ENCODE measurements at regions of chr4 and their contacts with region 1.

Region 1: GRCh38 chr4:106266201-106266600 is 49.8 kb downstream of the TBCK start:
- DNase-seq: no peak
- H3K4me3 Mint-ChIP-seq: no peak overlapping the region
- H3K27ac Mint-ChIP-seq: no peak overlapping the region
- H3K4me1 Mint-ChIP-seq: peaks cover 11% of the 10 kb centered on the region
- H3K27me3 Mint-ChIP-seq: no peaks in the 10 kb centered on the region
- CTCF ChIP-seq: no peak

Region 2: DNA sequence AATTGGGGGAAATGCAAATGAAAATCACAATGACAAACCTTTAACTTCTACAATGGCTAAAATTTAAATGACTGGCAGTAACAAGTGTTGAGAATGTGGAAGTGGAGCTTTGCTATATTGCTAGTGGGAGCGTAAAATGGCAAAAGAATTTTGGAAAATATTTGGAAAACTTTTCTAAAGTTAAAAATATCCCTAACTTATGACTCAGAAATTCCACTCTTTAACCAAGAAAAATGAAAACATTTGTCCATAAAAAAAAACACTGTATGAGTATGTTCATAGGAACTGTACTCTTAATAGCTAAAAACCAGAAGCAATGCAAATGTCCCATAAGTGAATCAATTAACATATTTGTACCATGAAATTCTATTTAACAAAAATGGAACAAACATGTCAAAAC is 46.2 kb after region 1 on chr4:
- CTCF ChIA-PET with region 1: interaction called, 5 read pairs
- intact Hi-C with region 1: loop called (anchors 5 kb)
- DNase-seq: no peak
- H3K4me3 Mint-ChIP-seq: no peak overlapping the region
- H3K27ac Mint-ChIP-seq: no peak overlapping the region
- H3K4me1 Mint-ChIP-seq: peaks cover 11% of the 10 kb centered on the region
- H3K27me3 Mint-ChIP-seq: no peaks in the 10 kb centered on the region
- CTCF ChIP-seq: no peak

Region 3: GRCh38 chr4:106369456-106370060 is 103.4 kb after region 1 on chr4:
- CTCF ChIA-PET with region 1: interaction called, 3 read pairs
- intact Hi-C with region 1: loop called (anchors 2 kb)
- DNase-seq: peak; percentile 43
- H3K4me3 Mint-ChIP-seq: no peak overlapping the region
- H3K27ac Mint-ChIP-seq: no peak overlapping the region
- H3K4me1 Mint-ChIP-seq: peaks cover 15% of the 10 kb centered on the region
- H3K27me3 Mint-ChIP-seq: no peaks in the 10 kb centered on the region
- CTCF ChIP-seq: peak; percentile 46

Region 4: DNA sequence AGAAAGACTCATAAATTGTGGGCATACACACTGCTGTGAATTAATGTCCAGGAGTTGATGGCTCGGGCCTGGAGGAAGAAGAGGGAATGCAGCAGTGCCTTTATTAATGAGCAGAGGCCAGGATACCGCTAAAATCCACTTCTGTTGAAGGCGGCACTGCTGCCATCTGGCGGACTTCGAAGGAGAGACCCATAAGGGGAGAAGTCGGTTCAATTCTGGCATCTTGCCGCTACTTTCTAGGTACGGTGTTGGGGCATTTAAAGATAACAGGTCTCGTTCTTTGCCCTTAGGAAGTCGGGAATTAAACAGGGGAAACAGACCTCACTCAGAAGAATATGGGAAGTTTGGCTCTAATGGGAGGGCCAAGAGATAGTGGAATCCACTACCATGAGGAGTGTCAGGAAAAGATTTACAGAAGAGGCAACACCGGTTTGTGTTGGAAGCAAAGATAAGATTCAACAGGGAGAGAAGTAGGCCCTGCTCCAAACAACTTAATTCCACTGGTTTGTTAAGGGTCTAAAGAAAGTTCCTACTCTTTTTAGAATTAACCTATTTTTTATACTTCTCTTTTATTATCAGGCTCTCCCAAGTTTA is 236.0 kb after region 1 on chr4:
- CTCF ChIA-PET with region 1: no interaction called
- intact Hi-C with region 1: loop called (anchors 2 kb)
- DNase-seq: peak; percentile 61
- H3K4me3 Mint-ChIP-seq: peak overlapping the region; percentile 14
- H3K27ac Mint-ChIP-seq: no peak overlapping the region
- H3K4me1 Mint-ChIP-seq: no peaks in the 10 kb centered on the region
- H3K27me3 Mint-ChIP-seq: no peaks in the 10 kb centered on the region
- CTCF ChIP-seq: peak; percentile 66

Region 5: GRCh38 chr4:106818764-106819163 is 552.6 kb after region 1 on chr4:
- CTCF ChIA-PET with region 1: no interaction called
- intact Hi-C with region 1: loop called (anchors 10 kb)
- DNase-seq: no peak
- H3K4me3 Mint-ChIP-seq: no peak overlapping the region
- H3K27ac Mint-ChIP-seq: no peak overlapping the region
- H3K4me1 Mint-ChIP-seq: no peaks in the 10 kb centered on the region
- H3K27me3 Mint-ChIP-seq: no peaks in the 10 kb centered on the region
- CTCF ChIP-seq: no peak

Measured in Calu3 (cell line).